Left lung (tissue), 14 donors: ENCODE measurements at regions of chr6 and their contacts with region 1.

Region 1: GRCh38 chr6:161370880-161371279 is 97.0 kb upstream of the AGPAT4 start:
- DNase-seq: peak in 2 of 4 donors; percentile 31 to 74
- ATAC-seq: peak; percentile 74
- H3K4me3 ChIP-seq: no peak overlapping the region
- H3K27ac ChIP-seq: no peak overlapping the region
- H3K4me1 ChIP-seq: peaks cover 3 to 12% of the 10 kb centered on the region in 2 donors
- H3K27me3 ChIP-seq: no peaks in the 10 kb centered on the region
- CTCF ChIP-seq: peak; percentile 82 to 86

Region 2: DNA sequence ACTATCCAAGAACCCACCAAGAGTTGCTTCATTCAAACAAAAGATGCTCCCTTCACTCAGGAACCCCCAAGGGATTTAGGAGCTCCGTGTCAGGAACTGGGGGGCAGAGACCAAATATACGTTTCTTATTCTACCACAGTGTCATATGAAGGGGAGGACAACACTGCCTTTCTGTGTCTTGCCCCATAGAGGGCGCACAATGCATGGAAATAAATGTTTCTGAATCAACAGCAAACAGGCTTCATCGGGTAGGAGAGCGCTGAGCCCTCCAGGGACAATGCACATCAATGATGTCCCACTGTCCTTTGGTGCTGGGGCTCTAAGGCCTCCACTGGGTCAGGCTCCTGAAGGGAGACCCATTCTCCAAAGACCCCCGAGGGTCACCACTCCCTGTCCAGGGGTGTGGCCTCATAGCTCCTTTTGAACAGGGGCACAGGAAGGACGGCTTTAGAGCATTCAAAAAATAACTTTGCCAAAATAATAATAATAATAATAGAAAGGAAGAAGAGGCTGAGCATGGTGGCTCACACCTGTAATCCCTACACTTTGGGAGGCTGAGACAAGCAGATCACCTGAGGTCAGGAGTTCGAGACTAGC is 637.7 kb before region 1 on chr6:
- intact Hi-C with region 1: loop called in 1 of 2 experiments (anchors 10 kb)
- DNase-seq: peak in 2 of 4 donors; percentile 49 to 73
- ATAC-seq: peak; percentile 89
- H3K4me3 ChIP-seq: no peak overlapping the region
- H3K27ac ChIP-seq: no peak overlapping the region
- H3K4me1 ChIP-seq: no peaks in the 10 kb centered on the region
- H3K27me3 ChIP-seq: no peaks in the 10 kb centered on the region
- CTCF ChIP-seq: peak; percentile 56 to 68

Region 3: GRCh38 chr6:160930547-160931377 is 440.1 kb before region 1 on chr6:
- intact Hi-C with region 1: loop called in 1 of 2 experiments (anchors 2 kb)
- DNase-seq: peak; percentile 75 to 91 (median 80)
- ATAC-seq: peak; percentile 100
- H3K4me3 ChIP-seq: peak overlapping the region; percentile 32 to 34
- H3K27ac ChIP-seq: no peak overlapping the region
- H3K4me1 ChIP-seq: no peaks in the 10 kb centered on the region
- H3K27me3 ChIP-seq: peaks cover 0 to 46% of the 10 kb centered on the region in 2 donors
- CTCF ChIP-seq: peak; percentile 83 to 91

Region 4: DNA sequence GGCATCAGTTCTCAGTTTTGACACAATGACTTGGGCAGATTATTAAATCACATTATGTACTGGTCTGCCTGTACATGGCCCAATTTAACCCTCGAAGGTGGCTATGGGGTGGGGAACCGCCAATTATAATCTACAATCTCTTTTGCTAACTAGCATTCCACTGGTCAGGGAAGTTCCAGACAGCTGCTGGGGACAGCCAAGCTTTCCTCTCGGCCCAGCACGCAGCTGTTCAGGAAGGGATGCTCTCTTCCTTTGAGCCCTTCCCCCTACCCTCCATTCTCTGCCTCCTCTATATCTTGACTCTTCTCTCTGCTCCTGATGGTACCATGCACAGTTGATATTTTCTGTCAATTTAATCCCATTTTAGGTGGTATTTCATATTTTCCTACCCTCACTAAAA is 136.5 kb after region 1 on chr6:
- intact Hi-C with region 1: no loop called
- DNase-seq: no peak
- ATAC-seq: no peak
- H3K4me3 ChIP-seq: no peak overlapping the region
- H3K27ac ChIP-seq: no peak overlapping the region
- H3K4me1 ChIP-seq: no peaks in the 10 kb centered on the region
- H3K27me3 ChIP-seq: no peaks in the 10 kb centered on the region
- CTCF ChIP-seq: no peak